Activated T-helper 1 cell treated with anti-CD3 and anti-CD28 coated beads, Interleukin-12 subunit alpha, Interleukin-12 subunit beta, Interleukin-2, Interleukin-4 antibody, amounts not matched to agents 30 ng/mL and 10 ng/mL and 1 ng/mL, durations not matched to agents 14 hours and 24 hours and 36 hours (primary cell): ENCODE measurements at regions of chr10 and their contacts with region 1.

Region 1: GRCh38 chr10:86936661-86937501 is 20.5 kb downstream of the MMRN2 start:
- DNase-seq: no peak
- H3K4me3 Mint-ChIP-seq: no peak overlapping the region
- H3K27ac Mint-ChIP-seq: no peak overlapping the region
- H3K4me1 Mint-ChIP-seq: no peaks in the 10 kb centered on the region
- H3K27me3 Mint-ChIP-seq: peaks cover 3% of the 10 kb centered on the region

Region 2: DNA sequence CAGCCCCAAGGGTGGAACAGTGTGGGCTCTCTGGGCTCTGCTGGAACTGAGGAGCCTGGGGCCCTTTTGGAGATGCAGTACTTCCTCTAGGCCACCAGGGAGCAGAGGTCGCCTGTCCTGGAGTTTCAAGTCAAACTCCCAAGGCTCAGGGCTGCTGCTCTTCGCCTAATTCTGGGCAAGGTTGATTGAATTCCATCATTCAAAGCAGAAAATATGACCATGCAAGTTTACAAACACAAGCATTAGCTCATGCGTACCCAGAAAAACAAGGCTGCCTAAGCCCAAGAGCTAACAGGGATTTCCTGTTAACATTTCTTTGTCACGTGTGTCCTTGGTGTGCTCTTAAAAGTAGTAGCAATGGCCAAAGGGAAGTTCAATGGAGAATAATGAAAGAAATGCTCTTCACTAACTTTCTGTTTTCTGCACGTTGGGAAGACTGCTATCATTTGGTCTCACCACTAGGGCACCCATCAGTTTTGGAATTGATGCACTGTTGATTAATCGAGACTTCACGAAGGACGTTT is 248.4 kb before region 1 on chr10:
- intact Hi-C with region 1: loop called (anchors 1 kb)
- DNase-seq: peak; percentile 28
- H3K4me3 Mint-ChIP-seq: no peak overlapping the region
- H3K27ac Mint-ChIP-seq: no peak overlapping the region
- H3K4me1 Mint-ChIP-seq: no peaks in the 10 kb centered on the region
- H3K27me3 Mint-ChIP-seq: peaks cover 9% of the 10 kb centered on the region

Region 3: GRCh38 chr10:86965986-86966654 is 29.2 kb after region 1 on chr10:
- intact Hi-C with region 1: loop called (anchors 1 kb)
- DNase-seq: no peak
- H3K4me3 Mint-ChIP-seq: peak overlapping the region; percentile 34
- H3K27ac Mint-ChIP-seq: peak overlapping the region; percentile 70
- H3K4me1 Mint-ChIP-seq: peaks cover 16% of the 10 kb centered on the region
- H3K27me3 Mint-ChIP-seq: peaks cover 14% of the 10 kb centered on the region

Region 4: DNA sequence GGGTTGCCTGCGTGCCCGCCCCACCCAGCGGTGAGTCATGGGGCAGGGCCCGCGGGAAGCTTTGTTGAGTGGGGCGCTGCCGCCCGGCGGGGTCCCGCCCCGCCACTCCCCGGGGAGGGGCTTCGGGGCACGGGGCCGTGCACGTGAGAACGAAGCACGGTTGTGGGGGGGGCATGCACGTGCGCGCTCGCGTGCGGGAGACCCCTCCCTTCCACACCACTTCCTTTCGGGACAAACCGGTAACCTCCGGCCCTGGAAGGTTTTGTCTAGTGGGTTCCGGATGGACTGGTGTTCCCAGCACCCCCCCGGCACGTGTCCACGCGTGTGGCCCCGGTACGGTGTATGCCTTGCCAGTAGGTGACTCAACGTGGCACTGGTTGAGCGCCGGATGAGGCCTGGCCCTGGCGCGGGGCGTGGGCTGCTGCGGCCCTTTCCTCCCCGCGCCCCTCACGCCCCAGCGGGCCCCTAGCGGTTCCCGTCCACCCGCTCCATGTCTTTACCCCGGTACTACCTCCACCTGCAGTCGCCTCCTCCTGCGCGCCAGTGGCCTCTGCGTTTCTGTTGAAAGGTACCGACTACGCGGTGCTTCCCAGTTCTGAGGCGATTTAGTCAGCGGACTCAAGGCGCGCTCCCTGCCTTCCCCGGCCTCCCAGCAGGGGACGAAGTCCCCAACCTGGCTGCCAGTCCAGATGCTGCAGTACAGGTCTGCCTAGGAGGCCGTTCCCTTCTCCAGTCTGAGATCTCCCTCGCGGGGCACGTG is 34.5 kb after region 1 on chr10:
- intact Hi-C with region 1: loop called (anchors 1 kb)
- DNase-seq: peak; percentile 76
- H3K4me3 Mint-ChIP-seq: peak overlapping the region; percentile 77
- H3K27ac Mint-ChIP-seq: peak overlapping the region; percentile 76
- H3K4me1 Mint-ChIP-seq: peaks cover 12% of the 10 kb centered on the region
- H3K27me3 Mint-ChIP-seq: peaks cover 35% of the 10 kb centered on the region